Right ventricle myocardium superior (tissue), 1 donor: ENCODE measurements at regions of chr15 and their contacts with region 1.

Region 1: DNA sequence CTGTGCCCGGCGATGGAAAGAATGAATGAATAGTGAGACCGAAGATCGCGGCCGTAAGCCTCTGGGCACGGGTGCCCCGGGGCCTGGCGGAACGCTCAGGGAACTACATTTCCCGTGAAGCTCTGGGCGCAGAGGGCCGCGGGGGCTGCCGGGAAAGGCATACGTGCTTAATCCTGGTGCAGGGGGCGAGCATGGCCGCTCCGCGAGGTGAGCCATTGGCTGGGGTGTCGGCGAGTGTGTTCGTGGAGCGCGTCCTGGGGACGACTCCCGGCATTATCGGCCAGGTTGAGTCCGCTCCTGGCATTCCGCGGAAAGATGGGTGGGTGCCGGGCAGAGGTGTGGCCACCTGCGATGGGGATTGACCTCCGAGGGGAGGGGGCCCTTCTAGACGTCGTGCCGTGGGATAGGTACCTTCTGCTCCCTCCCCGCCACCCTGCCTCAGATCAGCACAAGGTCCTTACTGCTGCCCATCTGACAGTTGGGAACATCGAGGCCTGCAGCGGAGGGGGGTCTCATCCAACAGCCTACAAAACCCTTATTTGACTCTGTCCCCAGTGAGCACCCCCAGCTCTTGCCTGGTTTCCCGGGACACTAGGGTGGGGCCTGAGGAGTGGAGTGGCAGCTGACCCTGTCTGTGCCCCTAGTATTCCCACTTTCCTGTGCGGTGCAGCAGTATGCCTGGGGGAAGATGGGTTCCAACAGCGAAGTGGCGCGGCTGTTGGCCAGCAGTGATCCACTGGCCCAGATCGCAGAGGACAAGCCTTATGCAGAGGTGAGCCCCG is at the start of gene MPI:
- DNase-seq: peak; percentile 93
- ATAC-seq: peak; percentile 96
- total RNA-seq, gene MPI: 53.2 TPM

Region 2: DNA sequence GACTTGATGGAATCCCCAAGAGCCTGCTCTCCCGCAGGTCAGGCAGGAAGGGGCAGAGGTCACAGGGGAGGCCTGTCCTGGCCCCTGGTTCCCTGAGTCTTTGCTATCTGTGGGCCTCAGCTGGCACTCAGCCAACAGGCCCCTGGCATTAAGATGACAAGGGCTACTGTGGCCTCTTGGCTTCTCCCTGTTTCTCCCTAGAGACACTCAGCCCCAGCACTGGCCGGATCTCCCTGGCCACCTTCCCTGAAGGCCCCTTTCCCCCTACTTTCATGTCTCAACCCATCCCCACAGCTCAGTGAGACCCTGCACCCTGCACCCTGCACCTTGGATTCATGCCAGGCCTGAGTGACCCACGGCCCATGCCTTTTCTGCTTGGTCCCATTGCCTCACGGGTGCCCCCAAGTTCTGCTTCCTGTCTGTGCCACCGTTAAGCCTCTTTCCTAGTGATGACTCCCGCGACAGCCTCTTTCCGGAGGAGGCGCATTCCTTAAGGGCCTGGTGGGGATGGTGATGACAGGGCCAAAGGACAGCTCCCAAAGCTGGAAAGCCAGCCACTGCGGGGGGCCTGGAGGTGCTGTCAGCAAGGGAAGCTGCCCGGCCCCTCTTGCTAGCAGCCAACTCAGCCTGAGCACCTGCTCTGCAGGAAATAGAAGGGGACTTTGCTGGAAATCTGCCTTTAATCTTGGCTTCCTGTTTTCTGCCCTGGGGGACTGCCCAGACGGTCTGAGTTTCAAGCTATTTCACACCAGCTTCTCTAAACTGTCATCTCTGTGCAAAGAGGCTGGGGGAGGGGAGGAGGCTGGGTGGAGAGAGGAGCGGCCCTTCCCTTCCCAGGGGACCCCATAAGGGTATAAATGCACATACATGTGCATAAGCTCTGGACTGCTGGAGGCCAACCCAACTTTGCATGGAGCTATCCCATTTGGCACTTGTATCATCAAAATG is 113.0 kb before region 1 on chr15:
- intact Hi-C with region 1: loop called (anchors 10 kb)
- DNase-seq: peak; percentile 51
- ATAC-seq: peak; percentile 3

Region 3: DNA sequence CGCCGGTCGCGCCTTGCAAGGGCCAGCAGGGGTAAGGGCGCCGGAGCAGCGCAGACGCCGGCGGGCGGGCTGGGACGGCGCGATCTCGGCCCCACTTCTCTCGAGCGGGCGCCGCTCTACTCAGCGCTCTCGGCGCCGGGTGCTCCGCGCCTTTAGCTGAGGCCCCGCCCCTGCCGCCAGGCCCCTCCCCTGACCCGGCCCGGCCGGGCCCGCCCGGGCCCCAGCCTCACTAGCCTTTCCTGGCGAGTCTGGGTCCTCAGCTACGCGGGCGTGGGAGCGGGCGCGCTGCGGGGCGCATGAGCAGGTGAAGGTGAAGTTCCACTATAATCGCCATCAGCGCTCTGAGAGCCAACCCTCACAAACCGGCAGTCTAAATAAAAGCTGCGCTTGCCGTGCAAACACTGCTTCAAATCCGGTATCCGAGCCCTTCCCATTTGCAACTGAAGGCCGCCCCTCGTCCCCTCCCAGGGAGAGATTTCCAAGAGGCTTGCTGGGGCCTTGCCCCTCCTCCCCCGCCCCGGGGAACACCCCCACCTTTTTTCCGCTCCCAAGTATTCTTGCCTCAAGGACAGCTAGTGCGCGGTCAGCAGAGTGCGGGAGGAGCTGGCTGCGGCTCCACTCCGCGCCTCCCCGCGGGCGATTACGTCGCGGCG is 66.7 kb after region 1 on chr15 and contains the start of gene RPP25:
- intact Hi-C with region 1: no loop called
- DNase-seq: peak; percentile 90
- ATAC-seq: peak; percentile 91
- total RNA-seq, gene RPP25: 3.4 TPM